Activated naive CD4-positive, alpha-beta T cell treated with anti-CD3 and anti-CD28 coated beads for 36 hours (primary cell): ENCODE measurements at regions of chr2 and their contacts with region 1.

Region 1: GRCh38 chr2:96164459-96165184 is 19.4 kb upstream of the DUSP2 start:
- DNase-seq: peak; percentile 89
- H3K4me3 Mint-ChIP-seq: peak overlapping the region; percentile 85
- H3K27ac Mint-ChIP-seq: peak overlapping the region; percentile 99
- H3K4me1 Mint-ChIP-seq: peaks cover 71% of the 10 kb centered on the region
- H3K27me3 Mint-ChIP-seq: no peaks in the 10 kb centered on the region

Region 2: DNA sequence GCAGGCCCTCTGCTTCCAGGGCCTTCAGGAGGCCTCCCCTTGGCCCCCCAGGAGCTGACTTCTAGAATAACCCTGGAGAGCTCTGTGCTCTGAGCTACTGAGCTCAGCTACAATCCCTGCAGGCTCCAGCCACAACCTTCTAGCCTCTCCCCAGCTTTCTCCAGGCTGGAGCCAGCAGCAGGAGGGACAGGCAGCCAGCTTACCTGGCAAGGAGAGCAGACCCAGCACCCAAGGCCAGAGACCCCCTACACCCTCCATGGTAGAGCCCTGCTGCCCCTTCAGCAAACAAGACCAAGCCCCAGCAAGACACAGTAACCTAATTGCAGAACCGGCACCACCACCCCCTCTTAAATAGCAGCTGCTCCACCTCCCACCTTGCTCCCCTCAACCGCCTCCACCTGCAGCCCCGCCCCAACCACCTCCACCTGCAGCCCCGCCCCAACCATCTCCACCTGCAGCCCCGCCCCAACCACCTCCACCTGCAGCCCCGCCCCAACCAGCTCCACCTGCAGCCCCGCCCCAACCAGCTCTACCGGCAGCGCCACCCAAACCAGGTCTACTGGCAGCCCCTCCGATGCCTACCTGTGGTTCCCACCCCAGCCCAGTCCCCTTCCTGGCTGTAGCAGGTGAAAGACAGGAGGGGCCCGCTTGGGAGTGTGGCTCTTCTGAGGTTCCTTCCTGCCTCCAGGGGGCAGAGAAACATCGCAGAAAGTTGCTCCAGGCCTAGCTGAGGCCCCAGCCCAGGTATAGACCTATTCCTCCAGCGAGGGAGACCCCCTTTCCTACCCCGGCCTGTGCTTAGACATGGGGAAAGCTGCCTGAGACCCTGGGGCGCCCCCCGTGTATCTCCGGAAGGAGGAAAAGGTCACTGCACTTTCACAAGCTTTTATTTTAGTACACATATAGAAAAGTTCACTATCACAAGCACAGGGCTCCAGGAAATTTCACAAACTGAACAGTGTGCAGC is 26.2 kb before region 1 on chr2 and contains the start of gene ASTL:
- CTCF ChIA-PET with region 1: interaction called, 76 read pairs
- intact Hi-C with region 1: no loop called
- DNase-seq: peak; percentile 88
- H3K4me3 Mint-ChIP-seq: no peak within 1 kb of the TSS
- H3K27ac Mint-ChIP-seq: peak within 1 kb of the TSS; percentile 82
- H3K4me1 Mint-ChIP-seq: peaks cover 24% of the 10 kb centered on the region
- H3K27me3 Mint-ChIP-seq: no peaks in the 10 kb centered on the region
- total RNA-seq, gene ASTL: 2.5 to 2.6 TPM

Region 3: DNA sequence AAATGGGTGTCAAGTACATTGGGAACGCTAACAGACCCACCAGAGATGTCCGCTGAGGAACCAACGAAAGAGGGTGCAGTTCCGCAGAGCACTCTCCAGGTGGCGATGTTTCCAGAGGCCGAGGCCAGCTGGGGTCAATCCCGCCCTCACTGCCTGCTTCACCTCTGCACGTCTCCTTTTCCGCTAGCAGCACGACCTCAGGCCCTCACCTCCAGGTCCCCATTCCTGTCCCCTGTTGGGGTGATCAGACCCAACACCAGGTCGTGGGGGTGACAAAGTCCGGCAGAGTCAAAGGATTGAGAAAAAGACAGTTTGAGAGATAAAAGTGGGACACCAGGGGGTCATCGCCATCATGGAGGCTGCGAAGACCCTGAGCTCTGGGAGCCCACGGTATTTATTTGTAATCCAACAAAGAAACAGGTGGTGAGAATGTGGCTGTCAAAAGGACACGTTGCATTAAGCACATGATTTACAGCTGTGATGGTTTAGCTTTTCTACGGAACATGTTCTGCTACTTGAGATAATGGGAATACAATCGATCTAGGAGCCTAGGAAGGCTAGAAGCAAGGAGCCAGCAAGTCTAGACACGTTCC is 1576.1 kb after region 1 on chr2:
- CTCF ChIA-PET with region 1: no interaction called
- intact Hi-C with region 1: no loop called
- DNase-seq: peak; percentile 50
- H3K4me3 Mint-ChIP-seq: no peak overlapping the region
- H3K27ac Mint-ChIP-seq: peak overlapping the region; percentile 72
- H3K4me1 Mint-ChIP-seq: peaks cover 37% of the 10 kb centered on the region
- H3K27me3 Mint-ChIP-seq: no peaks in the 10 kb centered on the region